ENCODE measurements at regions of chr1 and their contacts with region 1.

Region 1: DNA sequence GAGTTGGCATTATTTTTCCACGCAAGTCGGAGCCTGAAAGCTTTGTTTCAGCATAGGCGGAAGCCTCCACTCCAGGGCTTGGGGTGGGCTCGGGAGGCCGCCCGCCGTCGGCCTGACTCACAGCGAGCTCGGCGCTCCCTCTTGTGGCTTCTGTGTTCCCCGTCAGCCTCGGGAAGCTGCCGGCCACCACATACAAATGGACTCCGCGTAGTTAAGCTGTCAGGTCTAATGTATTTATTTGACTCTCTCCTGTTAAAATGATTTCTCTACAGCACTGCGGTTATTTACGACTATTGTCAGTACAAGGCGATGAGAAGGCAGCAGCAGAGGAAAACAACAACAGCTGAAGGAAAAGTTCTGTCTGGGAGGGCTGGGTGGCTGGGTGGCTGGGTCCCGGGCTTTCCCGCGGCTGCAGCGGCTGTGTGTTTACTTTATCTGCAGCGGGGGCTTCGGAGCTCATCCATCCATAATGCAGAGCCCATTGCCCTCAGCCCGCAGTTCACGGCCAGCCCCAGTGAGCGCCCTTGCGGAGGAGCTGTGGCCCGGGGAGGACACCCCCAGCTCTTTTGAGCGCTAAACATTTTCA is 375.7 kb upstream of the CAMK1G start:
- DNase-seq: peak; percentile 75
- H3K4me3 ChIP-seq: no peak overlapping the region
- H3K27ac ChIP-seq: no peak overlapping the region
- H3K4me1 ChIP-seq: no peaks in the 10 kb centered on the region
- H3K27me3 ChIP-seq: peaks cover 87% of the 10 kb centered on the region
- CTCF ChIP-seq: peak; percentile 79

Region 2: DNA sequence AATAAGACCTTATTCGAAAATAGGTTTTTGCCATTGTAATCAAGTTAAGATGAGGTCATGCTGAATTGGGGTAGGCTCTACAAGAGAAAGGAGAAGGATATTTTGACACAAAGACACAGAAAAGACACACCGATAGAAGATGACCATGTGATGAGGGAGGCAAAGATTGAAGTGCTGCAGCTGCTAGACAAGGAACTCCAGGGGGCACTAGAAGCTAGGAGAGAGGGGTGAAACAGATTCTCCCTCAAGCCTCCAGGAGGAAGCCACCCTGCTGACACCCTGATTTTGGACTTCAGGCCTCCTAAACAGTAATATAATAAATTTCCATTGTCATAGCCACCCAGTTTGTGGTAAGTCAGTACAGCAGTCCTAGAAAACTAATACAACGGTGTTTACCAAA is 131.1 kb before region 1 on chr1:
- CTCF ChIA-PET with region 1: interaction called, 3 read pairs
- POLR2A ChIA-PET with region 1: no interaction called
- intact Hi-C with region 1: loop called (anchors 10 kb)
- DNase-seq: peak; percentile 50
- H3K4me3 ChIP-seq: no peak overlapping the region
- H3K27ac ChIP-seq: no peak overlapping the region
- H3K4me1 ChIP-seq: no peaks in the 10 kb centered on the region
- H3K27me3 ChIP-seq: peaks cover 7% of the 10 kb centered on the region
- CTCF ChIP-seq: peak; percentile 52

Region 3: DNA sequence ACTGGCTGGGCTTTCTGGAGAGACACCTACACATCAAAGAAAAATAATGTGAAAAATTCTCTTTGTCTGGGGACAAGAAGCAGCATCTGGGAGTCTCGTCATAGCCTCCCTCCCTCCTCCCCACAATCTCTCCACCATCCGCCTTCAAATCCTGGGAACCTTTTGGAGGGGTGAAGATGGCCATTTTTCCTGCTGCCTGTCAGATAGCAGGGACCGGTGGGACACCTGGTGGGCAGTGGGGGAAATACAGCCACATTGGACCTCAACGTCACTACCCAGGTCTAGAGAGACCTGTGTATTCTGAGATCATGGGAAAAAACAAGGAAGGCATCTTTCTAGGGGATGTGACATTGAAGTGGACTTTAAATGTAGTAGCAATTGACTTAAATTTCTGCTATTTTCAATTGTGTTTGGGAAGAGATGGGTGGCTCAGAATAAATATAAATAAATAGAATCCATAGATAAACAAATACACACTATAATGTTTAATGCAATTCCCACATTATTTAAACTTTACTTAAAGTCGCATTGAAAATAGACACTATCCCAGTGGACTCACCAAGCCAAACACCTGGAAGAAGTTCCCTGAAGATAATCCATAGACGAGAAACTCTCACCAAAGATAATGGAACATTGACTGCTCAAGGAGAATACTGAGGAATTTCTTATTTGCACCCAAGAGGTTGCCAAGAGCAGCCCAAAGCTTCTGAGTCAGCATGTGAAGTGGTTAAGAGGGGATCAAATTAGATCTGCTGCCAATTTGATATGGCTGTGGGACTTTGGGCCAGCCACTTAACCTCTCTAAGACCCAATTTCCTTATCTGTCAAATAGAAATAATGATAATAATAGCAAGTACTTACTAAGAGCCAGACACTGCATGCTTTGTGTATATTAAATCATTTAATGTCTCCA is 228.1 kb after region 1 on chr1:
- CTCF ChIA-PET with region 1: no interaction called
- POLR2A ChIA-PET with region 1: no interaction called
- intact Hi-C with region 1: loop called (anchors 5 kb)
- DNase-seq: peak; percentile 74
- H3K4me3 ChIP-seq: no peak overlapping the region
- H3K27ac ChIP-seq: no peak overlapping the region
- H3K4me1 ChIP-seq: no peaks in the 10 kb centered on the region
- H3K27me3 ChIP-seq: peaks cover 26% of the 10 kb centered on the region
- CTCF ChIP-seq: peak; percentile 83

Region 4: GRCh38 chr1:209565759-209566678 is 358.2 kb after region 1 on chr1:
- CTCF ChIA-PET with region 1: interaction called, 3 read pairs
- POLR2A ChIA-PET with region 1: no interaction called
- intact Hi-C with region 1: loop called (anchors 2 kb)
- DNase-seq: peak; percentile 92
- H3K4me3 ChIP-seq: no peak overlapping the region
- H3K27ac ChIP-seq: no peak overlapping the region
- H3K4me1 ChIP-seq: peaks cover 33% of the 10 kb centered on the region
- H3K27me3 ChIP-seq: no peaks in the 10 kb centered on the region
- CTCF ChIP-seq: peak; percentile 93